Ovary (tissue), 10 donors: ENCODE measurements at regions of chr2 and their contacts with region 1.

Region 1: DNA sequence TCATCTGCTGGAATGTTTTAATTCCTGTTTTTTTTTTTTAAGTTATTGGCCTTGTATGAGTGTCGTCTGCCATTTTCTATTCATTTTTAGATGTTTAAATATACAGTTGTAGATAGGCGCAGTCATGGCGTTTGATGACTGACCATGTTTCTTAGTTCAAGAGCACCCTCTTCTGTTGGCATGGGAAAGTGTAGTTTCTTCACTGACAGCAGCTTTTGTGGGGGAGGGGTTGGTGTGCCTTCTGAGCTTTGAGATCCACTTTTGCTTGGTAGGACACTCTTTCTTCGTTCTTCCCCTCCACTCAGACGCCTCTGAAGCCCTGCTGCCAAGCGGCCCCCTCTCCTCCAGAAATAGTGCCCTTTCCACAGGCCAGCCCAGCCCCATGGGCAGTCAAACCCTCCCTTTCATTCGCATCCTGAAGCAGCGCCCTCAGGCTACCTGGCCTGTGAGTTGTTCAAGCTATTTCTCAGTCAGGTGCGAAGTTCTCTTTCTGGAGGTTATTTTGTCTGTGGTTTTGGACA is 492.0 kb downstream of the TNS1 start:
- DNase-seq: peak; percentile 61 to 79 (median 69)
- H3K4me3 ChIP-seq: no peak overlapping the region
- H3K27ac ChIP-seq: no peak overlapping the region
- H3K4me1 ChIP-seq: peaks cover 3% of the 10 kb centered on the region
- H3K27me3 ChIP-seq: no peaks in the 10 kb centered on the region
- CTCF ChIP-seq: peak; percentile 30 to 90 (median 79)
- EP300 ChIP-seq: no peak
- POLR2A ChIP-seq: peak; percentile 30

Region 2: GRCh38 chr2:216692636-216693413 is 818.0 kb before region 1 on chr2:
- intact Hi-C with region 1: loop called in 3 of 4 experiments (anchors 5 kb)
- DNase-seq: peak; percentile 84 to 90 (median 89)
- H3K4me3 ChIP-seq: peak overlapping the region; percentile 80
- H3K27ac ChIP-seq: peak overlapping the region in 1 of 2 donors; percentile 39
- H3K4me1 ChIP-seq: peaks cover 20% of the 10 kb centered on the region
- H3K27me3 ChIP-seq: no peaks in the 10 kb centered on the region
- CTCF ChIP-seq: no peak
- EP300 ChIP-seq: no peak
- POLR2A ChIP-seq: no peak

Region 3: DNA sequence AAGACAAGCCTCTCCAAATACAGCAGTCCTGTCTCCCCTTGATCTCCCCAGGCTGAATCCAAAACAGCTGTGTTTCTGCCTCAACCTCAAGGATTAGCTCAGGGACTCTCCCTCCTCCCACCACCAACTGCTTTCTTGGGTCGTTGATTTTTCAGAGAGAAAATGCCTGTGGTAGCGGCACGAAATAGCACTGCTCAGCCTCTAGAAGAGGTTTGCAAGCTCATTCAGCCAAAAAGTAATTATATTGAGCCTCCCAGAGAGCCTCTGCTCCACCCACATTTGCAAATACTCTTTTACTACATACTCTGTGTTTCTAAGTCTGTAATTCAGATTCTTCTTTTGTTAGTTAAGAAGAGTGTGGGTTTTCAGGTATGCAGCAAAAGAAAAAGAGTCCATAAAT is 254.6 kb before region 1 on chr2:
- intact Hi-C with region 1: no loop called
- DNase-seq: no peak
- H3K4me3 ChIP-seq: no peak overlapping the region
- H3K27ac ChIP-seq: no peak overlapping the region
- H3K4me1 ChIP-seq: peaks cover 5% of the 10 kb centered on the region
- H3K27me3 ChIP-seq: no peaks in the 10 kb centered on the region
- CTCF ChIP-seq: no peak
- EP300 ChIP-seq: no peak
- POLR2A ChIP-seq: no peak

Region 4: DNA sequence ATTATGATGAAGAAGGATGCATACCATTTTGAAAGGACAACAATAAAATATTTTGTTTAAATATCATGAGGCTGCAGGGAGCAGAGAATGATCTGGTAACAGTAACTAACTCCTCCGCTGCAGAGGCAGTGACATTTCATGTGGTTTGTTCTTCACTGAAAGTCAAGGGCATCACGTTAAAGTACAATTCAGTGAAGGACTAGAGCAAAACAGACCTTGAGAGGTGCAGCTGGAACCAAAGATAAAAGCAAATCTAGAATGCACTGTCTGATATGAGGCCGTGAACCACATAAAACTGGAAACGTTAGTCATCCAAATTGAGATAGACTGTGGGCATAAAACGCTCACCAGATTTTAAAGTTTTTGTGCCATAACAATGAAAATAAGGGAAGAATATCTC is 128.0 kb before region 1 on chr2:
- intact Hi-C with region 1: loop called in 1 of 4 experiments (anchors 5 kb)
- DNase-seq: peak in 1 of 5 donors; percentile 52
- H3K4me3 ChIP-seq: no peak overlapping the region
- H3K27ac ChIP-seq: peak overlapping the region in 1 of 2 donors; percentile 75
- H3K4me1 ChIP-seq: peaks cover 8% of the 10 kb centered on the region
- H3K27me3 ChIP-seq: no peaks in the 10 kb centered on the region
- CTCF ChIP-seq: no peak
- EP300 ChIP-seq: no peak
- POLR2A ChIP-seq: no peak

Region 5: GRCh38 chr2:217713395-217714286 is 202.8 kb after region 1 on chr2:
- intact Hi-C with region 1: loop called in 3 of 4 experiments (anchors 5 to 10 kb)
- DNase-seq: peak; percentile 73 to 89 (median 84)
- H3K4me3 ChIP-seq: no peak overlapping the region
- H3K27ac ChIP-seq: peak overlapping the region in 1 of 2 donors; percentile 2
- H3K4me1 ChIP-seq: peaks cover 11% of the 10 kb centered on the region
- H3K27me3 ChIP-seq: no peaks in the 10 kb centered on the region
- CTCF ChIP-seq: peak; percentile 94 to 95 (median 95)
- EP300 ChIP-seq: no peak
- POLR2A ChIP-seq: no peak